Left ventricle myocardium superior (tissue), 1 donor: ENCODE measurements at regions of chr22 and their contacts with region 1.

Region 1: GRCh38 chr22:24938741-24939341 is 7.7 kb downstream of the LHFPL7 start:
- DNase-seq: no peak
- ATAC-seq: peak; percentile 32

Region 2: DNA sequence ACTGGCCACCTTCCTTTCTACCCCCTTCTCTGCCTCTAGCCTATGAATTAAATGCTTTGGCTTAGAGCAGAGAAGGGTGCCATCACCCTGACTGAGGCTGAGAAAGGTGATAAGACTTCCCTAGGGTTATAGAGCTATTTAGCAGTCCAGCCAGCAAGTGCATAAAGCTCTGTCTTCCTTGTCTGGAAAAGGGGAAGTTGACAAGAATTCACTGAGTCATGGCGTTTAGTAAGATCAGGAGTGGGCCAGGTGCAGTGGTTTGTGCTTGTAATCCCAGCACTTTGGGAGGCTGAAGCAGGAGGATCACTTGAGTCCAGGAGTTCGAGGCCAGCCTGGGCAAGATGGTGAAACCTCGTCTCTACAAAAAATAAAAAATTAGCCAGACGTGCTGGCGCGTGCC is 55.4 kb before region 1 on chr22:
- intact Hi-C with region 1: no loop called
- DNase-seq: no peak
- ATAC-seq: no peak

Region 3: DNA sequence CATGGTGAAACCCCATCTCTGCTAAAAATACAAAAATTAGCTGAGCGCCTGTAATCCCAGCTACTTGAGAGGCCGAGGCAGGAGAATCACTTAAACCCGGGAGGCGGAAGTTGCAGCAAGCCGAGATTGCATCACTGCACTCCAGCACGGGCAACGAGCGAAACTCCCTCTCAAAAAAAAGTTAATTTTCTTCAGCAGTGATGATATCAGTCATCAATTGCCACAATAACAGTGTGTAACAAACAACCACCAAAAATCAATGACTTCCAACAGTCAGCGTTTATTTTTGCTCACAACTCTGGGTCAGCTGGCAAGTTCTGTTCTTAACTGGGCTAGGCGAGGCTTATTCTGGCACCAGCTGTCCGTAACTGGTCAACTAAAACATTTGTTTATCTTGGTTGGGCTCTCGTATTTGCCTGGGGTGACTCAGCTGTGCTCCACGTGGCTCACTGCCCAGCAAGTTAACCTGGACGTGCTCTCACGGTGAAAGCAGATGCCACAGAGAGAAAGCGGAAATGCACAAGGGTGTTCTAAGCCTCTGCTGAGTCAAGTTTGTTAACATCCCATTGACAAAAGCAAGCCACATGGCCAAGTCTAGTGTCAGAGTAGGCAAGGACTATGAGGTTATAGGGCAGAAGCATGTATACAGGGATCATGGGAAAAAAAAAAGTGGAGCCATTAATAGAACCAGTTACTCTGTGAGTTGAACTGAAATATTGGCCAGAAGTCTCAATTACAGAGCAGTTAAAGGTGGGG is 44.4 kb before region 1 on chr22:
- intact Hi-C with region 1: no loop called
- DNase-seq: peak; percentile 87
- ATAC-seq: peak; percentile 95

Region 4: DNA sequence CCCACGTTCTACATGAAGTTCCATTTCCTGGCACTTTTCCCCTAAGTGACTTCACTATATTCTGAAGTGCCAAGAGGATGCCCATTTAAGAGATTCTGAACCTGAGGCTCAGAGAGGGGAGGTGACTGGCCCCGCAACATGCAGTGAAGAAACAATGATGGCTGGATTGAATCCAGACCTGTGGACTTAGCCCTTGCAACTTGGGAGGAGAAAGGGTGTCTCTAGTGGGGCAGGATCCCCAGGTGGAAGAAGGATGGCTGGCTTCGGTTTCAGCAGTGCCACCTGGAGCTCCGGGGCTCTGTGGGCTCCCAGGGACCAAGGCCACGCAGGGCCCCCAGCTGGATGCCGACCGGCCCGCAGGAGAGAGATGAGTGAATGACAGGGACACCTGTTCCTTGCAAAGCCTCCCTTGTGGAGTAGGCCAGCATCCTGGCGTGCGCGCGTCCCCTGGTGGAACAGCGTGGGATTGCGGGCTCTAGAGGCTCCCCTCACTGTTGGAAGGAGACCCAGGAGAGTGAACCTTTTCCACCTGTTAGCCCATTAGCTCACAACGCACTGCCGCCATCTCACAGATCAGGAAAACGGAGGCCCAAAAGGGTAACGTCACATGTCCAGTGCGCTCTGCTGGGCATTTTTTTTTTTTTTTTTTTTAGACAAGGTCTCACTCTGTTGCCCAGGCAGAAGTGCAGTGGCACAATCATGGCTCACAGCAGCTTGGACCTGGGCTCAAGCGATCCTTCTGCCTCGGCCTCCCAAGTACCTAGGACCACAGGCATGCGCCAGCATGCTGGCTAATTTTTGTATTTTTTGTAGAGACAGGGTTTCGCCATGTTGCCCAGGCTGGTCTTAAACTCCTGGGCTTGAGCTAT is 118.4 kb after region 1 on chr22:
- intact Hi-C with region 1: loop called (anchors 5 kb)
- DNase-seq: peak; percentile 81
- ATAC-seq: peak; percentile 78